ENCODE measurements at regions of chr4 and their contacts with region 1.

Region 1: DNA sequence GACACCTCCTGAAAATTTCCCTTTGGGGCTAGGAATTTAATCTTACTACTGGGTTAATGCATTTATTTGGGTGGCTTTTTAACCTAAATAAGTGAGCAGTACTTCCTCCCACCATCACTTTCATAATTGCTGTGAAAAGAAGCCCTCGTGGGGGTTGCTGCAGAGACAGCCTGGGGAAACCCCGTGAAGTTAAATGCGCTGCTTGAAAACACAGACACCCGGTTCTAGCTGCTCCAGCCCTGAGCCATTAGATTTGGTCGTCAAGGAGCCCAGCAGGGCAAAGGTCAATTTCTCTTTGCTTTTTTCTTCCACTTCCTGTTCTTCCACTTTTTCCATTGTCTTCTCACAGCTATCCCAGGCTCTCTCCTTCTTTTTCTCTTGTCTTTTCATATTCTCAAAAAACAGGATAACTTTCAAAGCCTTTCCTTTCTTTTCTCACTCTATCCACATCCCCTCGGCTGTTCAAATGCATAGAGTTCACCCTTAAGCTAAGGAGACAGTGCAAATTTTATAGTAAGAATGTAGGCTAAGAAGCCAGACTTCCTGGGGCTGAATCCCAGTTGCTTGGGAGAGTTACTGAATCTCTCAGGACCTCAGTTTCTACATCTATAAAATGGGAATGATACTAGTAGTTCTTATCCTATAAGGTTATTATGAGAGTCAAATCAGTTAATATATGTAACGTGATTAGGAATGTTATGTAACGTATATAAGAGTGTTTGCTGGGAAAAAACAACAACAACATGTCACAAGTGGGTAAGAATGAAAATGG is 91.5 kb upstream of the ZNF827 start:
- DNase-seq: peak; percentile 35
- ATAC-seq: peak; percentile 97
- H3K4me3 Mint-ChIP-seq: peak overlapping the region; percentile 63
- H3K27ac Mint-ChIP-seq: peak overlapping the region; percentile 86
- H3K4me1 Mint-ChIP-seq: peaks cover 51% of the 10 kb centered on the region
- H3K27me3 Mint-ChIP-seq: no peaks in the 10 kb centered on the region
- CTCF ChIP-seq: no peak

Region 2: GRCh38 chr4:145956288-145956890 is 73.7 kb before region 1 on chr4:
- CTCF ChIA-PET with region 1: interaction called, 4 read pairs
- POLR2A ChIA-PET with region 1: no interaction called
- intact Hi-C with region 1: loop called (anchors 5 kb)
- DNase-seq: no peak
- ATAC-seq: peak; percentile 77
- H3K4me3 Mint-ChIP-seq: no peak overlapping the region
- H3K27ac Mint-ChIP-seq: no peak overlapping the region
- H3K4me1 Mint-ChIP-seq: peaks cover 6% of the 10 kb centered on the region
- H3K27me3 Mint-ChIP-seq: no peaks in the 10 kb centered on the region
- CTCF ChIP-seq: peak; percentile 87

Region 3: GRCh38 chr4:146049802-146050201 is 19.7 kb after region 1 on chr4:
- CTCF ChIA-PET with region 1: interaction called, 4 read pairs
- POLR2A ChIA-PET with region 1: interaction called, 16 read pairs
- intact Hi-C with region 1: loop called (anchors 1 kb)
- DNase-seq: no peak
- ATAC-seq: peak; percentile 90
- H3K4me3 Mint-ChIP-seq: peak overlapping the region; percentile 50
- H3K27ac Mint-ChIP-seq: peak overlapping the region; percentile 81
- H3K4me1 Mint-ChIP-seq: peaks cover 73% of the 10 kb centered on the region
- H3K27me3 Mint-ChIP-seq: no peaks in the 10 kb centered on the region
- CTCF ChIP-seq: no peak

Region 4: GRCh38 chr4:146175541-146176453 is 145.7 kb after region 1 on chr4 and contains the start of gene LSM6:
- CTCF ChIA-PET with region 1: no interaction called
- POLR2A ChIA-PET with region 1: no interaction called
- intact Hi-C with region 1: loop called (anchors 1 kb)
- DNase-seq: peak; percentile 75
- ATAC-seq: peak; percentile 93
- H3K4me3 Mint-ChIP-seq: peak within 1 kb of the TSS; percentile 87
- H3K27ac Mint-ChIP-seq: peak within 1 kb of the TSS; percentile 90
- H3K4me1 Mint-ChIP-seq: peaks cover 44% of the 10 kb centered on the region
- H3K27me3 Mint-ChIP-seq: no peaks in the 10 kb centered on the region
- CTCF ChIP-seq: no peak
- total RNA-seq, gene LSM6: 57.4 and 59.7 TPM in 2 replicates

Region 5: DNA sequence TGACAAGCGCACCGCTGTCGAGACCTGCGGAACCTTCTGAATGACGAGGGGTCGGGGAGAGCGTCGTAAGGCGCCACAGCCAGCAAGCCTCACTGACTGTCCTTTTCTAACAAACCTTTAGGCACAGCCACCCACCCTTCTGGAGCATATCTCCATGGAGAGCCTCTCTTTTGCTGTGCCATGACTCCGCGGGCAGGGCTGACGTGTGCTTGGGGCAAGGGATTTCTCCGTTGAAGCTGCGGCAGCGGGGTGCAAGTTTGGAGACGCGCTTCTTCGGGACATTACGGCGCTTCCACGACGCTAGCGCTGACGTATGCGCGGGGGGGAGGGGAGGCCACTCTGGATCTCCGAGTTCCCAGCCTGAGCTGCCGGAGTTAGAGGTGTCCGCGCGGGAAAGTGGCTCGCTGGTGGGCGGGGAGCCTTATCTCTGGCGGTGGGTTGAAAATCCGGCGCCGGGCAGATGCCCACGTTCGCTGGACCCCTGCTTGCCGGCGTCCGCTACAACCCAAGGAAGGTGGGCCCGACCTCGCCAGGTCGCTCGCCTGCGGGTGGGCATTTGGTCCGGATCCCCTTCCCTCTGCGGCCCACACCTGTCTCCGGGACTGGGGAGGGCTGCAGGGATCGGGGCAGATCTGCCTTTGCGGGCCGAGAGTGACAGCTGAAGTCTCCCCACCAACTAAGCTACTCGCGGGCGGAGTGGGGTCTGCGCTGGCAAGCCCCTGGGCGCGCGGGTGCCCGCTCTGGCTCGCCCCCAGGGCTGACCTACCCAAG is 492.2 kb after region 1 on chr4:
- CTCF ChIA-PET with region 1: no interaction called
- POLR2A ChIA-PET with region 1: no interaction called
- intact Hi-C with region 1: loop called (anchors 5 kb)
- DNase-seq: peak; percentile 75
- ATAC-seq: peak; percentile 80
- H3K4me3 Mint-ChIP-seq: no peak overlapping the region
- H3K27ac Mint-ChIP-seq: no peak overlapping the region
- H3K4me1 Mint-ChIP-seq: peaks cover 21% of the 10 kb centered on the region
- H3K27me3 Mint-ChIP-seq: no peaks in the 10 kb centered on the region
- CTCF ChIP-seq: no peak

Measured in activated B cell treated with CpG ODN at 0.5 μM for 24 hours (primary cell).